Sciatic nerve (tissue), 2 donors: ENCODE measurements at regions of chr11 and their contacts with region 1.

Region 1: GRCh38 chr11:131065435-131066413 is 149.4 kb upstream of the SNX19 start:
- DNase-seq: no peak
- ATAC-seq: no peak

Region 2: GRCh38 chr11:131675121-131675888 is 609.6 kb after region 1 on chr11:
- intact Hi-C with region 1: loop called (anchors 5 kb)
- DNase-seq: peak; percentile 27
- ATAC-seq: no peak

Region 3: DNA sequence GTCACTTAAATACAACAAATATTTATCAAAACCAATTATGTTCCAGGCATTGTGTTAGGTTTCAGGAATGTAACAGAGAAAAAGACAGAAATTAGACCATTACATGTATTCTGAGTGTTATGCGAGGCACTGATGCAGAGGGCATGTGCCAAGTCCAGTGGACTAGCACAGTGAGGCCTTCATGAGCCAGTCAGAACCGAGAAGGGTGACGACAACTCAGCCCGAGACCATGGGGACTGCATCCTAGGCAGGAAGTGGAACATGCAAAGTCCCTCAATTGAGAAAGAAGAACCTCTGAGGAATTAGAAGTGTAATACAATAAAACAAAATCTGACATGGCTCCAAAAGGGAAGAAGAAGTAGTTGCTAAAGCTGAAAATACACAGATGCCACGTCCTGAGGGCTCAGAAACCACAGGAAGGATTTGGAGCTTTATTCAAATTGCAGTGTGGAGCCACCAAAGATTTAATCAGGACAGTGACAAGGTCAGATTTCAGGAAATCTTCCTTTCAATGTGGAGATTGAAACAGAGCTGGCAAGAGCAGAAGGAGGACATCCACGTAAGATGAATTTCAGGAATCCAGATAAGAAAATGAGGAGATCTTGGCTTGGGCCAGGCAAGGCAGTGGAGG is 834.3 kb after region 1 on chr11:
- intact Hi-C with region 1: loop called (anchors 5 kb)
- DNase-seq: no peak
- ATAC-seq: peak; percentile 50